ENCODE measurements at regions of chr2 and their contacts with region 1.

Region 1: DNA sequence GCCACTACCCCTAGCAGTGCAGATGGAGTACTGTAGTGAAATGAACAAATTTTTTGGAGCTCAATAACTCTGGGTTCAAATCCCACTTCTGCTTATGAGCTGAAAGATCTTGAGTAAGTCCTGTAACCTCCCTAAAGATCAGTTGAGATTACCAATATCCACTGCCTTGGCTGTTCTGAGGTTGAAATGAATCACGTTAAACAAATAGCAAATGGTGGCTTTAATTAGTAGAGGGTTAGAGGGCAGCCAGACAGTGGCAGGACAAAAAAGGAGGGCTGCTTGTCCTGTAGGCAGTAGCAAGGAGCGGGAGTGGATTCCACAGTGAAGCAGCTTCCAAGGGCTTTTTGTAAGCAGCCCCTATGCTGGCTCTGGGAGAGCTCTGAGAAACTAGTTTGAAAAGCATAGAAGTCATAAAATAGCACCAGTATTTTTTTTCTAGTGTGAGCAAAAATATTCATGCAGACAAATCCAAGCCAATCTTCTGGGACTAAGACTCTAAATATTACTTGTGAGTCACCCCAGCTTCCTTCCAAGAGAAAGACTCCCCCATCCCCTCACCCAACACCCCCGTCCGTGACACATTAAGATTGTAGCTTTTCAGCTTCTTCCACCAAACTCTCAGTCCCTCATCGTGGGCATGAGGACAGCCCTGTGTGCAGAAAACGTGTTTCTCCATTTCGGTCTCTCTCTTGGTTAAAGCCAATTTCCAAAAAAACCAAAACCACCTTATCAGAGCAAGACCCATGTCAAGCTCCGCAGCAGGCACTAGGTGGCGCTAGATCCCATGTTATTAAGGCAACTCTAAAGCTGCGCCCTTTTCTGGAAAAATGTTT is 123.5 kb upstream of the LGALSL start:
- DNase-seq: peak; percentile 84
- ATAC-seq: peak; percentile 85

Region 2: GRCh38 chr2:64052468-64053241 is 277.8 kb before region 1 on chr2:
- intact Hi-C with region 1: loop called (anchors 5 kb)
- DNase-seq: no peak
- ATAC-seq: no peak

Region 3: DNA sequence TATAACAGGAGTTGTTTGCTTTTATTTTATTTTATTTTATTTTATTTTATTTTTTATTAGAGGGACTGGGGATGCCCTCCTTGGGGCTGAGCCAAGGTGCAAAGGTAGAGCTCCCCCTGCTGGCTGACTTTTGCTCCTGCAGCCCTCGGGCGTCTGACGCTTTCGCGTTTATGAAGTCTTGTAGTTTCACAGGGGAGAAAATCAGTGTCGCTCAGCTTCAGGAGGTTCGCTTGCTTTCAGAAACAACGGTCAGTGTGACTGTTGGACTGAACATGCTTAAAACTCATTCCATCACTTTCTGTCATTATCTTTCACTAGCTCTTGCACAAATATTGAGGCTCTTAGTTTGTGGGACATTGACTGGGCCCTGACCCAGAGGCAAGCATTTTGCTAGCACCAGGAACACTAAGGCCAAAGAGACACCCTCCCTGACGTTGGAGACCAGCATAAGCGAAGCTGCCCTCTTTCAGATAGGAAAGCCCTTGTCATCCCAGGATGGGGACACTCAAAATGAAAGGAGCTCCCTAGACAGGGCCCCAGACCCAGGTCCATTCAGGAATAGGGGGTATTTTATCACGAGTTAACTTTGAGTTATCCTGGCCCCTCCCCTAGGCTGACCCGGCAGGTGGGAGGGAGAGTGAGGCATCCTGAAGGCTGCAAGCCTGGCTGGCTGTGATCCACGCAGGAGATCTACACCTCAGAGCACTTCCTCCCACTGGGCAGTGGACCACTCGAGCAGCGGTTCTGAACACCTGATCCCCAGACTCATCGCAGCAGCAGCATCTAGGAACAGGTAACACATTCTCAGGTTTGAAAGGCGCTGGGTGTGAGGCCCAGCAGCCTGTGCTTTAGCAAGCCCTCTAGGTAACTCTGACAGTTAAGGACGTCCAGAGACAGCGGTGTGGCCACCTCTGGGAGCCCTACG is 157.8 kb after region 1 on chr2:
- intact Hi-C with region 1: loop called (anchors 2 kb)
- DNase-seq: peak; percentile 72
- ATAC-seq: peak; percentile 73

Region 4: DNA sequence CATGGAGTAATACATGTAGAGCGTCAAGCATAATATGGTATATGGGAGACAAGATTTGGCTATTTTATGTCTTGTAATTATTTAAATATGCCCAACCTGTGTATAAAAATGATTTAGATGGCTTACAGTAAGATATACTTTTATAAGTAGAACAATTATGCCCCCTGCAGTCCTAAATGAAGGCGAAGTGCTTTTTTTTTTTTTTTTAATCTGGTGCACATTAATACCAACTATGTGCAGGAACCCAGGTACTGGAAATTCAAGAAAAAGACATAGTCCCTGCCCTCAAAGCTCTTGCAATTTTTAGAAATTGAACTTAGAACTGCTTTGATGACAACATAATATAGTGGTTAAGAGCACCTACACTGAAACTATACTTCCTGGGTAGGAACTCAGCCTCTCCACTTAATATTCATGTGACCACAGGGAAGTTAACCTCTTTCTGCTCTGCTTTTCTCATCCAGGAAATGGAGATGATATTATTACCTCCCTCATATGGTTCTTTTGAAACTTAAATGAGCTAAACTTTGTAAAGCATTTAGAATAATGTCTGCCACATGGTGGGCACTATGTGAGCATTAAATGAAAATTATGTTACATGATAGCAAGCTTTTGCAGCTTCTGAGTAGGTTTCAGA is 231.8 kb after region 1 on chr2:
- intact Hi-C with region 1: loop called (anchors 5 kb)
- DNase-seq: no peak
- ATAC-seq: peak; percentile 62

Measured in Right ventricle myocardium superior (tissue), 1 donor.